Ascending aorta (tissue), 2 donors: ENCODE measurements at regions of chr15 and their contacts with region 1.

Region 1: DNA sequence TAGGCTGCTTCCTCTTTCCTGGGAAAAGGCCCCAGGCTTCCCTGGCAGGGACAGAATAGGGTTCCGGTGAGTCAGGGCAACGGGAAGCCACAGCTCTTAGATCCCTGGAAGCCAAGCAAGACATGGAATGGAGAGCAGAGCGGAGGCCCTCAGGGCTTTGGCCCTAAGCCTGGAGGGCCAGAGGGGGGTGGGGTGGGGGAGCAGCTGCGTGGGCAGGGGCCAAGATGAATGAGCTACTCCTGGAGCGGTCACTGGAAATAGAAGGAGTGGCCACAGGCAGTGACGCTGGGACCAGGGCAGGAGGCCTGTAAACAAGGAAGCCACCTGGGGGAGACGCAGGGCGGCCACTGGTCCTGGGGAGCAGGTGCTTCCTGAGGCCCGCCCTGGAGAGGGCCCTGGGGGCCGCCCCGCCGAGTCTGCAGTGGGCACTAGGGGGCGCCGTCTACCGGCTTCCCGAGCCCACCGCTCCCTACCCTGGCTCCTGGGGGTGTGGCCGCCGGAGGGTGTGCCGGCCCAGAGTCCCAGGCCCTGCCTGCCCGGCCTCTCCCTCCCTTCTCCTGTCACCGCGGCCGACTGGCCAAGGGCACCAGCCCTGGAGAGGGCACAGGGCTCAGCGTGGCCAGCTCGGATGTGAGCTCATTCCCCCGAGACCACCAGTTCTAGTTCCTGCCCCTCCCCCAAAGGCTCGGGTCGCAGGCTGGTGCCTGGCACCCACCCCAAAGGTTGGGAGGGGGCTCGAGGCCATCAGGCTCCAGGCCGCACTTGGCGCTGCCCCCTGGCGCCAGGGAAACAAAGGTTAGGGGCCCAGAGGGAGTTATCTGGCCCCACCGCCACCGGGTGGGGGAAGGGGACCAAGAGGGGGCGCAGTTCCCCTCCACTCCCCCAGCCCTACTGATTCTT is 12.1 kb downstream of the VPS18 start:
- DNase-seq: peak; percentile 79 to 95
- H3K4me3 ChIP-seq: peak overlapping the region; percentile 32 to 66
- H3K27ac ChIP-seq: peak overlapping the region; percentile 96
- H3K4me1 ChIP-seq: peaks cover 19 to 24% of the 10 kb centered on the region in 2 donors
- H3K27me3 ChIP-seq: no peaks in the 10 kb centered on the region
- CTCF ChIP-seq: peak; percentile 75 to 82 (median 75)

Region 2: GRCh38 chr15:40893733-40894688 is 12.3 kb before region 1 on chr15 and contains the start of gene VPS18:
- intact Hi-C with region 1: loop called (anchors 1 kb)
- DNase-seq: peak; percentile 91 to 99
- H3K4me3 ChIP-seq: peak within 1 kb of the TSS; percentile 65 to 82
- H3K27ac ChIP-seq: peak within 1 kb of the TSS; percentile 85 to 89
- H3K4me1 ChIP-seq: peaks cover 0 to 13% of the 10 kb centered on the region in 2 donors
- H3K27me3 ChIP-seq: no peaks in the 10 kb centered on the region
- CTCF ChIP-seq: peak; percentile 98 to 99 (median 98)
- total RNA-seq, gene VPS18: 51.8 TPM

Region 3: DNA sequence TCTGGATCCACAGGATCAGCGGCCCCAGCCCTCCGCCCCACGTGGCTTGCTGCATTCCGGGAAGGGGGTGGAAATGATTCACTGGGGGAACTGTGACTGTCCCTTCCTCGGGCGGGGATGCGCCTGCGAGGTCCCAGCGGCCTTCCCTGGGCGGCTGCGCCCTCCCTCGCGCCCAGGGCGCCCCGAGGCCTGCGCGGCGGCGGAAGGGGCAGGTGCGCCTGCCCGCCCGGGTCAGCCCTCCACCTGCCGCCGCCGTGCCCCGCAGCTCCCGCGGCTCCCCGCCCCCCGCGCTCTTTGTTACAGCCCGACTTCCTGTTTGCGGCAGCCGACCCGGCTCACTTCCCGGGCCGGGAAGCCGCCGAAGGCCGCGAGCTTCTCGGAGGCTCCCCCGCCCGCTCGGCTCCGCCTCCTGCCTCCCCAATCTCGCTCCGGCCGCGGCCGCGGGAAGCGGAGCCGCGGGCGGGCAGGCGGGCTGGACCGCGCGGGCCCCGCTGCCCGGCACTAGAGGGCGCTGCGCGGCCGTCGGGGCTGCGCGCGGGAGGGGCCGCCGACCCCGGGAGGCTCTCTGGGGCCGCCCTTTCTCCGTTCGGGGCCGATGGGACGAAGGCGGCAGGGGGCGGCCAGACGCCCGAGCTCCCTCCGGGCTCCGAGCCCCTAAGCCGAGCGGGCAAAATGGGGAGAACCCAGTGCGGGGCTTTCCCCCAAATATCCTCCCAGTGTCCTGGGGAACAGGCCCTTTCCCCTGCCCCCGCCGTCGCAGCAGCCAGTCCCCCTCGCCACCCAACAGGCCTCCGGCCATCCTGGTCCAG is 35.4 kb after region 1 on chr15:
- intact Hi-C with region 1: loop called (anchors 1 kb)
- DNase-seq: peak in 1 of 2 donors; percentile 84
- H3K4me3 ChIP-seq: peak overlapping the region; percentile 69 to 70
- H3K27ac ChIP-seq: peak overlapping the region; percentile 77 to 88
- H3K4me1 ChIP-seq: peaks cover 0 to 17% of the 10 kb centered on the region in 2 donors
- H3K27me3 ChIP-seq: no peaks in the 10 kb centered on the region
- CTCF ChIP-seq: peak in 2 of 3 experiments; percentile 32 to 94

Region 4: GRCh38 chr15:40982855-40983254 is 76.5 kb after region 1 on chr15:
- intact Hi-C with region 1: loop called (anchors 1 kb)
- DNase-seq: peak in 1 of 2 donors; percentile 91
- H3K4me3 ChIP-seq: no peak overlapping the region
- H3K27ac ChIP-seq: peak overlapping the region; percentile 82 to 94
- H3K4me1 ChIP-seq: peaks cover 17 to 49% of the 10 kb centered on the region in 2 donors
- H3K27me3 ChIP-seq: no peaks in the 10 kb centered on the region
- CTCF ChIP-seq: peak in 2 of 3 experiments; percentile 26 to 31

Region 5: GRCh38 chr15:41116116-41116871 is 210.0 kb after region 1 on chr15 and contains the start of gene INO80:
- intact Hi-C with region 1: loop called (anchors 1 kb)
- DNase-seq: peak; percentile 85 to 98
- H3K4me3 ChIP-seq: peak within 1 kb of the TSS; percentile 83 to 85
- H3K27ac ChIP-seq: peak within 1 kb of the TSS; percentile 97 to 98
- H3K4me1 ChIP-seq: peaks cover 0 to 11% of the 10 kb centered on the region in 2 donors
- H3K27me3 ChIP-seq: no peaks in the 10 kb centered on the region
- CTCF ChIP-seq: no peak
- total RNA-seq, gene INO80: 57.8 TPM

Region 6: GRCh38 chr15:41230650-41231533 is 324.6 kb after region 1 on chr15 and contains the starts of genes CHP1 and EXD1:
- intact Hi-C with region 1: loop called (anchors 5 kb)
- DNase-seq: peak; percentile 89 to 99
- H3K4me3 ChIP-seq: peak within 1 kb of the TSS; percentile 70 to 89
- H3K27ac ChIP-seq: peak within 1 kb of the TSS; percentile 80 to 96
- H3K4me1 ChIP-seq: peaks cover 0 to 23% of the 10 kb centered on the region in 2 donors
- H3K27me3 ChIP-seq: no peaks in the 10 kb centered on the region
- CTCF ChIP-seq: peak; percentile 97 to 99 (median 99)
- total RNA-seq, gene CHP1: 294 TPM
- total RNA-seq, gene EXD1: not detected